ENCODE measurements at regions of chr17 and their contacts with region 1.

Region 1: GRCh38 chr17:75405365-75406221 is at the start of gene GRB2:
- DNase-seq: peak; percentile 100
- ATAC-seq: peak; percentile 87
- H3K4me3 Mint-ChIP-seq: peak within 1 kb of the TSS; percentile 97
- H3K27ac Mint-ChIP-seq: peak within 1 kb of the TSS; percentile 95
- H3K4me1 Mint-ChIP-seq: peaks cover 49% of the 10 kb centered on the region
- H3K27me3 Mint-ChIP-seq: no peaks in the 10 kb centered on the region
- total RNA-seq, gene GRB2: 166 to 178 TPM

Region 2: GRCh38 chr17:75289115-75289831 is 116.3 kb before region 1 on chr17 and contains the start of gene SLC25A19:
- CTCF ChIA-PET with region 1: interaction called, 11 read pairs
- POLR2A ChIA-PET with region 1: interaction called, 9 read pairs
- DNase-seq: peak; percentile 99
- ATAC-seq: peak; percentile 92
- H3K4me3 Mint-ChIP-seq: peak within 1 kb of the TSS; percentile 97
- H3K27ac Mint-ChIP-seq: peak within 1 kb of the TSS; percentile 100
- H3K4me1 Mint-ChIP-seq: peaks cover 27% of the 10 kb centered on the region
- H3K27me3 Mint-ChIP-seq: no peaks in the 10 kb centered on the region
- total RNA-seq, gene SLC25A19: 41.1 to 43.6 TPM

Region 3: GRCh38 chr17:75338335-75338734 is 67.3 kb before region 1 on chr17:
- CTCF ChIA-PET with region 1: interaction called, 4 read pairs
- POLR2A ChIA-PET with region 1: interaction called, 10 read pairs
- DNase-seq: no peak
- ATAC-seq: peak; percentile 54
- H3K4me3 Mint-ChIP-seq: peak overlapping the region; percentile 60
- H3K27ac Mint-ChIP-seq: peak overlapping the region; percentile 88
- H3K4me1 Mint-ChIP-seq: peaks cover 81% of the 10 kb centered on the region
- H3K27me3 Mint-ChIP-seq: no peaks in the 10 kb centered on the region

Measured in activated CD8-positive, alpha-beta T cell treated with anti-CD3 and anti-CD28 coated beads, Interleukin-2, amount 10 ng/mL, durations not matched to agents 7 days and 5 days (primary cell).